ENCODE measurements at regions of chr12 and their contacts with region 1.

Region 1: GRCh38 chr12:32062881-32063280 is 43.8 kb upstream of the BICD1 start:
- DNase-seq: no peak
- ATAC-seq: no peak
- H3K4me3 ChIP-seq: no peak overlapping the region
- H3K27ac ChIP-seq: peak overlapping the region in 1 of 2 experiments; percentile 35; a peak in 1 of 6 replicates
- H3K4me1 ChIP-seq: no peaks in the 10 kb centered on the region
- CTCF ChIP-seq: no peak
- EP300 ChIP-seq: no peak
- POLR2A ChIP-seq: no peak
- RAD21 ChIP-seq: no peak

Region 2: DNA sequence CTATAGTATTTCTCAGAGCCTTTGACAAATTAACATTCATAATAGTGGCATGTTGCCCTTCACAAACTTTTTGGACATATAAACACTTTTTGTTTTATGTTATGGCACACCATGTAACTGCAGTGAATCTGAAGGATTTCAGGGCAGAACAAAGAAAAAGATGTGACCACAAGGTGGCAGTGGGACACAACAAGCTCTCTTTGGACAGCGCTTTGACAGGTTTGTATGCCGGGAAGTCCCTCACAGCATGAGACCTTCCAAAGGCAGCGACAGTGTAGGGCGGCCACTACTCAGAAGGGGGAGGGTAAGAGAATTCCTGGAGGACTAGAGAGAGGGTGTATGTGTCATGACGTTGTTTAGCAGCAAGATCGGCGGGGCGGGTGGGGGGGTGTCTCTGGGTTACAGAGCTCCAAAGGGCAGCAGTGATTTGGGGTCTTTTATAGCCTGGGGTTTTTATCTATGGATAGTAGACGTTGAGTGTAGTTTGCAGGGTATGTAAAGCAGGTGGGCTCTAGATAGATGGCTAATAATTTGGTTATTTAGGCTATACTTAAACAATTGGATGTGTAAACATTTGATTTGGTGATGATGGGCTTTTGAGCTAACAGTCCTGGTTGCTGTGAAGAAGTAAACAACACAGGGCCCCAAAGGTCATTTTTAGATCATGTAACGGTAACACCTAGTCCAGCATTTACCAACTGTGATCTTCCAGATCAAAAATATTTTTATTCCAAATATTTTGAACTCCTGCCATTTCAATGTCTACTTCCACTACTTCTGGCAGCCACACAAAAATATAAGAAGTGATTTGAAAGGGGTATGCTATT is 380.5 kb before region 1 on chr12:
- CTCF ChIA-PET with region 1: interaction called, 12 read pairs
- POLR2A ChIA-PET with region 1: no interaction called
- DNase-seq: peak; percentile 63 to 95
- ATAC-seq: peak; percentile 98
- H3K4me3 ChIP-seq: peak overlapping the region; percentile 16; the same call in 1 of the 3 replicates
- H3K27ac ChIP-seq: peak overlapping the region; percentile 46 to 70; a peak in 5 of 6 replicates
- H3K4me1 ChIP-seq: 0 out of 3 replicates have a peak, but pooled peaks cover 6% of the 10 kb centered on the region
- CTCF ChIP-seq: peak; percentile 85
- EP300 ChIP-seq: no peak
- POLR2A ChIP-seq: no peak
- RAD21 ChIP-seq: peak; percentile 98 to 99

Region 3: DNA sequence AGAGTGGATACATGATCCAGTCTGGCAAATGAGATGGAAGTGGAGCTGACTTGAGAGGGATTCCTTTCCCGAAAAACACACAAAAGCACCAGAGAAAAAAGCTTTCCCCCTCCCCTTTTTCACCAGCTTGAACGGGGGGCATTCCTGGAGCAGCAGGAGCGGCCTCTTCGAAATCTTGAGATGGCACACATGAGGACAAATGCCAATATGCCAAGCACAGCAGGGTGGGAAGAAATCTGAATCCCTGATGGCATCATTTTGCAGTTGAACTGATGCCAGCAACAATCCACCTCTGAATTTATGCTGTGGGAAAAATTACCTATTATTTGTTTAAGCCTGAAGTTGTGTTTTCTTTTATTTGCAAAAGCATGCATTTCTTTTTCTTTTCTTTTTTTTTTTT is 14.1 kb after region 1 on chr12:
- CTCF ChIA-PET with region 1: interaction called, 10 read pairs
- POLR2A ChIA-PET with region 1: no interaction called
- DNase-seq: no peak
- ATAC-seq: no peak
- H3K4me3 ChIP-seq: no peak overlapping the region
- H3K27ac ChIP-seq: no peak overlapping the region
- H3K4me1 ChIP-seq: no peaks in the 10 kb centered on the region
- CTCF ChIP-seq: no peak
- EP300 ChIP-seq: no peak
- POLR2A ChIP-seq: no peak
- RAD21 ChIP-seq: no peak

Region 4: DNA sequence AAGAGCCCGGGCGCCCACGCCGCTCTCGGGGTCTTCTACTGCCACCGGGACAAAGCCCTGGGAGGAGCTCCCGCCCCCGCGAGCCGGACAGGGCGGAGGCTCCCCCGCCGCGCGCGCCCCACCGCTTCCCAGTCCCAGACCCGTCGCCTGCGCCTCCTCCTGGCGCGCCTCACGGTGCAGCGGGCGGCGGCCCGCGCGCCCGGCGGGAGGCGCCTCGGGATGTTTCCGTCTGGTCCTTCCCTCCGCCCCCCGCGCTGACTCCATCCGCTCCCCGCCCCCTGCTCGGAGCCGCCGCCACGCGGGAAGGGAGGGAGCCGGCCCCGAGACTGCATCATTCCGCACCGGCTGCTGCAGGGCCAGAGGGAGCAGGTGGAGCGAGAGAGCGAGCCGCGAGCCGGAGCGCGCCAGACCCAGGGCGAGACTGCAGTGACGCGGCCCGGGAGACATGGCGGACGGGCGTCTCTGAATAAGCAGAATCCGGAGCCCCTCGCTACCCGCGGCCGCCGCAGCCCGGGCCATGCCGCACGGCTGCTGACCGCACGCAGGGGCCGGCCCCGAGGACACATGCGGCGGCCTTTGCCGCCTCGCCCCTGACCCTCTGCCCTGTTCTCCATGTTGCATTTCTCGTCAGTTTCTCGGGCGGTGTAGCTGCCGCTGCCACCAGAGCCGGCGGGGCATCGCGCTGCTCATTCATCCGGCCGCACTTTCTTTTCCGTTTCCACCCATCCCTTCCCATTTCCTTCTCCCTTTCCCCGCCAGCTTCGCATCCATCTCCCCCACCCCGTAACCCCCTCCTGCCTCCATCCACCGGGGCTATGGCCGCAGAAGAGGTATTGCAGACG is 43.9 kb after region 1 on chr12 and contains the start of gene BICD1:
- CTCF ChIA-PET with region 1: interaction called, 29 read pairs
- POLR2A ChIA-PET with region 1: interaction called, 4 read pairs
- DNase-seq: peak; percentile 75 to 89
- ATAC-seq: peak; percentile 95 to 96
- H3K4me3 ChIP-seq: peak within 1 kb of the TSS; percentile 94
- H3K27ac ChIP-seq: peak within 1 kb of the TSS; percentile 97 to 98
- H3K4me1 ChIP-seq: peaks cover 28% of the 10 kb centered on the region
- CTCF ChIP-seq: peak; percentile 57
- EP300 ChIP-seq: no peak; a peak in 1 of 5 replicates
- POLR2A ChIP-seq: peak; percentile 91
- RAD21 ChIP-seq: peak; percentile 7 to 62; a peak in 3 of 5 replicates
- polyA plus RNA-seq, gene BICD1: 21.7 and 24.3 TPM in 2 replicates

Region 5: DNA sequence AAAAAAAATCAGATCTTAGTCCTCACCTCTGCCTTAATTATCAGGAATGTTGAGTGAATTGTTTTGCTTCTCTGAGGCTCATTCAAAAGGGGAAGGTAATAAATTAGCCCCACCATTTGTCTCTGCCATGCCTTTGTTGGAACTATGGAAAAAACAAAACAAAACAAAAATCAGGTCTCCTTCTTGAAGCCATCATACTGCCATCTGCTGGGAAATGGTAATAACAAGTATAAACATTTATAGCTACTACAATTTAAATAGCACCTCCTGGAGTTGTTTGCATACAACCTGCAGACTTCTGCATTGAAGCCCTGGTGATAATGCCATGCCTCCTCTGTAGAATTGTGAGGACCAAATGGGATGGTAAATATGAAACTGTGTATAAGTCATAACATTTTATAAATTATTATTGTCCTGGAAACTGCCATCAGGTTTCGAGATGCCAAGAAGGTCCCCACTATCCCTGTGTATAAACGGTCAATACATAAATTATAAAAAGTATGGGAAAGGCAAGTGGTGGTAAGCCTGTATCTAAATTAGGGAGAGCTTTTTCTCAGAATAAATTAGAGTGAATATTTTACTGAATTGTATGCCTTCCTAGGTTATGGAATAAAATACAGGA is 249.3 kb after region 1 on chr12:
- CTCF ChIA-PET with region 1: interaction called, 42 read pairs
- POLR2A ChIA-PET with region 1: no interaction called
- DNase-seq: peak; percentile 45 to 80
- ATAC-seq: peak in 1 of 2 experiments; percentile 84; a peak in 4 of 6 replicates
- H3K4me3 ChIP-seq: no peak overlapping the region
- H3K27ac ChIP-seq: no peak overlapping the region
- H3K4me1 ChIP-seq: no peaks in the 10 kb centered on the region; the same call in 2 of the 3 replicates
- CTCF ChIP-seq: peak; percentile 81
- EP300 ChIP-seq: no peak
- POLR2A ChIP-seq: no peak
- RAD21 ChIP-seq: peak; percentile 67